ENCODE measurements at regions of chr1 and their contacts with region 1.

Region 1: GRCh38 chr1:112369392-112370285 is 26.4 kb upstream of the CTTNBP2NL start:
- DNase-seq: peak; percentile 81
- CTCF ChIP-seq: peak; percentile 99

Region 2: DNA sequence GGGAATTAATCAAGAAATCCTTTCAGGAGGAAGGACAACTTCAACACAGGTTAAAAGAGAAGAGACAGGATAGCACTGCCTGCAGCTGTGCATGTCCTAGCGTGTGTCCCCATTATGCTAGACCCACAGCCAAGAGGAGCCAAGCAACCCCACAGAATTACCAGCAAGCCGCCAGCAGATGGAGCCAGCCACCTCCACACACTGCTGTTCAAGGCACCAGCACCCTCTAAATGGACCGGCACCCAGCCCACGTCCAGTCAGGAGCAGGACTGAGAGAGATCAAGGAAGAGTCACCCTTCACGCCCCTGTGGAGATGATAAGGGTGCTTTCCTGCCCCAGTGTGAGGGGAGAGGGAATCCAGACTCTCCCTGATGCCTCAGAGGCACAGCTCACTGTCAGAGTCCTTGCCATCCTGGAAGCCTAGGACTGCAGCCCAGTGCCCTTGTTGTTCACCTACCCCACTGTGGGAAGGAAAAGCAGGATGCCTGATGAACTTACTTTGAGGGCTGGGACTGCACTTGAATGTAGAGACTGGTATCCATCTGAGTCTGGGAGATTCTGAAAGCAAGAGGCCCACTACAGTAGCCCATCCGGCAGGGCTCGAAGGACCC is 10.7 kb before region 1 on chr1:
- CTCF ChIA-PET with region 1: interaction called, 104 read pairs
- POLR2A ChIA-PET with region 1: no interaction called
- DNase-seq: peak; percentile 57
- CTCF ChIP-seq: peak; percentile 80

Region 3: GRCh38 chr1:112381324-112382076 is 11.9 kb after region 1 on chr1:
- CTCF ChIA-PET with region 1: interaction called, 16 read pairs
- POLR2A ChIA-PET with region 1: no interaction called
- DNase-seq: no peak
- CTCF ChIP-seq: no peak